Prostate gland (tissue), 2 donors: ENCODE measurements at regions of chr22 and their contacts with region 1.

Region 1: DNA sequence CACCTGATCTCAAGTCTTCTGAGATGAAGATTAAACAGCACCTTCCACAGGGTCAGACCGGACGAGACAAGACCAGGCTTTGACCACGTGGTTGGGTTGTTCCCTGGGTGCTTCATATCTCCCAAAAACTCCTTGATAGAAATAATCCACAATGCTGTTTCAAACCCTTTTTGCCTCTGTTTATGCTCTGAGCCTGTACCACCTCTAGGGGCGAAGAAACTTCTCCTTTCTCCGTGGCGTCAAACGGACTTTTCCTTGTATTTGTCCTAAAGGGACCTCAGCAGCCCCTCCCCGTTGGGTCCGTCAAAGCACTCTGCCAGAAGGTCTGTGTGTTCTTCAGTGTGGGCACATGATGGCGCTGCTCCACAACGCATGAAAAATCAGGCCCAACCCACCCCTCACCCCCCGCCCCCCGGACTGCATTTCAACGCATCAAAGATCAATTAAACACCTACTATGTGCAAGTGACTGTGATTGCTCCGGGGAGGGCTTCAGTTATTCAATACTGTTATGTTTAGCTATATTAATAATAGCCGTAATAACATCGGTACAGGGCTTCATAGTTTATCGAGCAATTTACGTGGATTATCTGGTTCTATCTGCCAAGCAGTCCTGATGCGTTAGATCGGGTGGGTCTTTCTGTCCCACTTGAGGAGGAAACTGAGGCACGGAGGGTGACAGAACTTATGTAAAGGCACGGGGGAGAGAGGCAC is 17.3 kb upstream of the EIF3D start:
- DNase-seq: peak; percentile 14
- H3K4me3 ChIP-seq: no peak overlapping the region
- H3K27ac ChIP-seq: no peak overlapping the region
- H3K4me1 ChIP-seq: no peaks in the 10 kb centered on the region
- H3K27me3 ChIP-seq: no peaks in the 10 kb centered on the region
- CTCF ChIP-seq: peak in 3 of 4 experiments; percentile 20 to 42 (median 33)
- POLR2A ChIP-seq: no peak

Region 2: DNA sequence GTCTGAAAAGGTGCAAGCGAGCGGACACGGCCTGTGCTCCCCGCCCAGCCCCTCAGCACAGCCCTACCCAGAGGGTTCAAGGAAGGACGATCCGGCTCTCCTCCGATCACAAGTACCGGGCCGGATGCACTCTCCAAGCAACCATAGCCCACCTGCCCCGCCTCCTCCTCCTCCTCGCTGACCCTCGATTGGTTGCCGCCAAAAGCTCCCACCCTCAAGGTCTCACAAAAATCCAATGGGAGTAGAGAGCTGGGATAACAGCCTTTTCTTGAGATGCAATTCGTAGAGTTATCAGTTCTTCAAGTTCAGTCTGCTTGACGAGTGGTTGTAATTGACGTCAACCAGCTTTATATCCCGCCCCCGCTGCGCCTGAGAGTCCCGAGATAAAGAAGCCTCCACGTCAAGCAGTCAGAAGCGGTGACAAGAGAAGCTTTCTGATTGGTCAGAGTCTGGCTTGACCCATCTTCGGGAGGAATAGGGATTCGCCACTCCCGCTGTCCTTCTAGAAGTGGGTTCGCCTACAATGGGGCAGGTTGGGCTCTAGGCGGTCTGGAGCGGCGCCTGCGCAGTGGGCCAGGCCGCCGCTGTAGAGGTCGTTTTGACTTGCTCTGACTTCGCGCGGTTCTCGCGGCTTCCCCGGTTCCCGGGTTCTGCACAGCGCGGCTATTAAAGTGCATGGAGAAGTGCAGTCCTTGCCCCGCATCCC is 229.9 kb after region 1 on chr22 and contains the start of gene IFT27:
- intact Hi-C with region 1: loop called (anchors 5 kb)
- DNase-seq: peak; percentile 100
- H3K4me3 ChIP-seq: peak within 1 kb of the TSS; percentile 88 to 91
- H3K27ac ChIP-seq: peak within 1 kb of the TSS; percentile 84 to 85
- H3K4me1 ChIP-seq: no peaks in the 10 kb centered on the region
- H3K27me3 ChIP-seq: no peaks in the 10 kb centered on the region
- CTCF ChIP-seq: peak in 1 of 4 experiments; percentile 11
- POLR2A ChIP-seq: peak; percentile 57
- total RNA-seq, gene IFT27: 16.5 to 26.4 TPM

Region 3: GRCh38 chr22:36865346-36865745 is 319.1 kb after region 1 on chr22:
- intact Hi-C with region 1: no loop called
- DNase-seq: no peak
- H3K4me3 ChIP-seq: no peak overlapping the region
- H3K27ac ChIP-seq: no peak overlapping the region
- H3K4me1 ChIP-seq: no peaks in the 10 kb centered on the region
- H3K27me3 ChIP-seq: peaks cover 8% of the 10 kb centered on the region
- CTCF ChIP-seq: no peak
- POLR2A ChIP-seq: no peak